ENCODE measurements at regions of chr3 and their contacts with region 1.

Region 1: GRCh38 chr3:157081681-157082210 is 78.2 kb downstream of the CCNL1 start:
- DNase-seq: peak; percentile 77 to 94 (median 88)
- ATAC-seq: peak; percentile 99
- H3K4me3 ChIP-seq: no peak overlapping the region
- H3K27ac ChIP-seq: no peak overlapping the region
- H3K4me1 ChIP-seq: peaks cover 0 to 11% of the 10 kb centered on the region in 2 donors
- H3K27me3 ChIP-seq: no peaks in the 10 kb centered on the region
- CTCF ChIP-seq: peak; percentile 96 to 97

Region 2: DNA sequence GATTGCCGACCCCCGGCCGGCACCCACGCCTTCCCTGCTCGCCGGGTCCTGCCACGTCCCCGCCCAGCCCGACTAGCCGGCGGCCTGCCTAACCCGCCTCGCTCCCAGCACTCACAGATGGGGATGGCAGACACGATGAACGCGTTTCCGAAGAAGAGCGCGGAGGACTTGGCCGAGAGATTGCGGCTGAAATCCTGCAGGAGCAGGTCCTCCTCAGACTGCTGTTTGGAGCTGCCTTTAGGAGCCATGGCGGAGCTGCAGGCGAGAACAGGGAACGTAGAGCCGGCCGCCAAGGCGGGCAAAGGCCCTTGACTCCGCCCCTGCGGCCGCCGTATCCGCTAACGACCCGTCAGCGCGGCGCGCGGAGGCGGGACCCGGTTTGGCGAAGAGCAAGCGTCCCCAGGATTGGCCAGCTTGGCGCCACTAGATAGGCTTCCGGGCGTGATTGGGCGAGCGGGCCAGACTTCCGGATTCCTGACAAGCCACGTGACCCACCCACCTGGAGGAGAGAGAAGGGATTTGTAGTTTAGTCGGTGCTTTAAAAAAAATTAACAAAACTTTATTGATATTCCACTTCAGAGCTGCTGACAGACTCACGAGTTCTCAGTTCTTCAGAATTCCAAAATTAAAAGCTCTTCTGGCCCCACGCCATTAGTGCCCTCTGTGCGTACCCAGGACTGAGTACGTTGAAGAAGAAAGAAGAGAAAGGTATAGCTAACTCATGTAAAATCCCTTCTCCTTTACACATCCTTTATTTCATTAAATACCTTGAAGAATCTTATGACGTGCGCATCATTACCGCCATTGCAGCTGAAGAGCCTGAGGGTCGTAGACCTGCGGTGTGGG is 526.7 kb before region 1 on chr3 and contains the start of gene SSR3:
- intact Hi-C with region 1: loop called in 1 of 2 experiments (anchors 10 kb)
- DNase-seq: peak; percentile 97 to 100 (median 99)
- ATAC-seq: peak; percentile 100
- H3K4me3 ChIP-seq: peak within 1 kb of the TSS; percentile 72 to 93
- H3K27ac ChIP-seq: peak within 1 kb of the TSS; percentile 84 to 90
- H3K4me1 ChIP-seq: peaks cover 22 to 36% of the 10 kb centered on the region in 2 donors
- H3K27me3 ChIP-seq: no peaks in the 10 kb centered on the region
- CTCF ChIP-seq: peak; percentile 22 to 48
- polyA plus RNA-seq, gene SSR3: 94.3 to 128 (median 124) TPM

Region 3: DNA sequence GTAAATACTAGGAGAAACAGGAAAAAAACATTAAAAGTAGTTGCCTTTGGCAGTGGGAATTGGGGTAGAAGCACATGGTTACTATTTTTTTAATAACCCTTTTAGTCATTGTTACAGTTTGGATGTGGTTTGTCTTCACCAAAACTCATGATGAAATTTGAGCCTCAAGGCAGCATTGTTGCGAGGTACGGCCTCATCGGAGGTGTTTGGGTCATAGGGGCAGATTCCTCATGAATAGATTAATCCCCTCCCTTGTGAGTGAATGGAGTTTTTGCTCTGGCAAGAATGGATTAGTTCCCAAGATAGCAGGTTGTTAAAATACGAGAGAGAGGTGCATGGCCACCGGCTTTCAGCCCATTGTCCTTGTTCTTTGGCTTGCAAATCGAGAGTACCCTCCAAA is 163.0 kb before region 1 on chr3:
- intact Hi-C with region 1: no loop called
- DNase-seq: no peak
- ATAC-seq: no peak
- H3K4me3 ChIP-seq: no peak overlapping the region
- H3K27ac ChIP-seq: no peak overlapping the region
- H3K4me1 ChIP-seq: no peaks in the 10 kb centered on the region
- H3K27me3 ChIP-seq: no peaks in the 10 kb centered on the region
- CTCF ChIP-seq: no peak

Measured in left lung (tissue), 14 donors.